Heart left ventricle (tissue), 16 donors: ENCODE measurements at regions of chr10 and their contacts with region 1.

Region 1: DNA sequence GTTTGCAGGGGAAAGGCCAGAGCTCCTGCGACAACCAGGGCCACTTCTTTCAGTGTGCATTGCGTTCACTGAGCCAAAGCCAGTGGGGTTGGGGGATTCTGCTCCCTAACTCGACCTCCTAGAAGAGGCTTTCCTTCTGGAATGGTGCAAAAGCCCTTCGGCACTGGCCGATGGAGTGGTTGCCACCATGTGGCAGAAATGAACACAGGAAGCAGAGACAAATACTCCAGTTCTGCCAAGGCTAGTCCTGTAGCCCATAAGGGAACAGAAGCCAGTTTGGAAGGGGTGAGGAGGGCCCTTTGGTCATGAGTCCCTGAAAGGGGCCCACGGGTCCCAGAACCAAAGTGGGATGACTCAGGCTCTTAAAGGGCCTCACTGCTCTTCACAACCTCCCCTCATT is 29.7 kb upstream of the ACSL5 start:
- DNase-seq: no peak
- ATAC-seq: peak in 3 of 4 donors; percentile 56 to 65 (median 64)
- H3K4me3 ChIP-seq: no peak overlapping the region
- H3K27ac ChIP-seq: no peak overlapping the region
- H3K4me1 ChIP-seq: no peaks in the 10 kb centered on the region
- H3K27me3 ChIP-seq: no peaks in the 10 kb centered on the region
- CTCF ChIP-seq: peak in 4 of 12 donors; percentile 6 to 31 (median 17)
- POLR2A ChIP-seq: no peak

Region 2: DNA sequence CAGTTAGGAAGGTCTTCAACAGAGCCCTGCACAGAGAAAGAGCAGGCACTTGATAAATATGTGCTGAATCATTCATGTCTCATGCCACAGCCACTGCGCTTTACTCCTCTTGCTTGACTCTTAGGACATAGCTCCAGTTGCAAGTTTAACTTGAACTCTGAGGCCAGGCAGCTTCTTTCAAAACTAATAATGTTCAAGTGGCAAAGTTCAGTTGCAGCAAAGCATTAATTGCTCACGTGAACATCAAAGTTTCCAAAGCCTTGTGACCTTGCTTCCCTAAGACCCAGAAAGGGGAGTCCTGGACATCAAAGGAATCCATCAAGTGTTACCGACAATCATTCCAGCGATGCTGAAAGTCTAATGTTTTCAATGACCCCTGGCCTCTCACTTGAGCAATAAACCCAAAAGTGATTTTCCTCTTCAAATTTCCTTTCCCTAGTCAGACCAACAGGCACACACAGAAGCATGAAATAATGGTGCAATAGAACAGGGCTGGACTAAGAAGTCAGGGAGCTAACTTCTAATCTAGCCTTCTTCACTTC is 82.9 kb before region 1 on chr10:
- intact Hi-C with region 1: no loop called
- DNase-seq: no peak
- ATAC-seq: no peak
- H3K4me3 ChIP-seq: no peak overlapping the region
- H3K27ac ChIP-seq: no peak overlapping the region
- H3K4me1 ChIP-seq: no peaks in the 10 kb centered on the region
- H3K27me3 ChIP-seq: no peaks in the 10 kb centered on the region
- CTCF ChIP-seq: no peak
- POLR2A ChIP-seq: no peak

Region 3: DNA sequence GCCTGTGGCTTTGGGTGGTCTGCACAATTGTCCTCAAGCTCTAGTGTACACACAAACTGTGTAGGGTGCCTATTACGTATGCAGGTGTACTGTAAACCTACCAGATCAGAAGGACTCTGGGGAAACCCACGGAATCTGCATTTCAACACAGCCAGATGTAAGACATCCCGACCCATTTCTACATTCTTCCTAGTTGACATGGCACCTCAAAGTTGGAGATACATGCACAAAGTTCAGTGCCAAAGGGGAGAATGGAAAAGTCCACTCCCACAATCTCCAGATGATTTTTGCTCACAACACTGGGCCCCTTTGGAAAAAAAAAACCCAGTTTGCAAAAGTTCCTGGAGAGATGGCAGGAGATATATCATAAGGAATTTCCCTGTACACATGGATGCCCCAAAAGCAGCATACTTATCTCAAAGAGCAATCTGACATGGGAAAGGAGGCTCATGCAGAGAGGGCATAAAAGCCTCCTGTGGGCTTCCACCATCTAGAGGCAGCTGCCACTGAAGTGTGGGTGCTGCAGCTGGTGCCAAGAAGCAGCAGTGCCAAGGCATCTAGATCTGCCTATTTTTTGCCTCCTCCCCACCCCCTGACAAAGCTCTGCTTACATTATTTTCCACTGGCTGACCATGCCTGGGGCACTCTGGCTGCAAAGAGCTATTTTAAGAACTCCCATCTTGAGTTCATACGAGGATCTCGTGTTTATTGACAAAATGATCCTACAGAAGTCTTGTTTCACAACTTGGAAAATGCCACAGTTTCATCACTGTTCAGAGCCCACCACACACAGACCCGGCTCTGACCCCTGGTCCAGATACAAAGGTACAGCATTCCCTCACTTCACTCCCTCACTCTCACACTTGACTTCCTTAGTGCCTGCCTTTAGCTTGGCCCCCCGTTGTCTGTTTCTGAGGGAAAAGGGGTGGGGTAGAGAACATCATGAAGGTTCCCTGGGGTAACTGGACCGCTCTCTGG is 48.1 kb before region 1 on chr10:
- intact Hi-C with region 1: no loop called
- DNase-seq: peak in 4 of 5 donors; percentile 53 to 85 (median 66)
- ATAC-seq: peak; percentile 92 to 97 (median 94)
- H3K4me3 ChIP-seq: no peak overlapping the region
- H3K27ac ChIP-seq: peak overlapping the region in 8 of 12 donors; percentile 6 to 78 (median 38)
- H3K4me1 ChIP-seq: peaks cover 0 to 26% (median 6%) of the 10 kb centered on the region in 12 donors
- H3K27me3 ChIP-seq: no peaks in the 10 kb centered on the region
- CTCF ChIP-seq: no peak
- POLR2A ChIP-seq: no peak

Region 4: GRCh38 chr10:112409755-112410154 is 65.5 kb after region 1 on chr10:
- intact Hi-C with region 1: loop called in 1 of 10 experiments (anchors 5 kb)
- DNase-seq: no peak
- ATAC-seq: no peak
- H3K4me3 ChIP-seq: no peak overlapping the region
- H3K27ac ChIP-seq: no peak overlapping the region
- H3K4me1 ChIP-seq: no peaks in the 10 kb centered on the region
- H3K27me3 ChIP-seq: no peaks in the 10 kb centered on the region
- CTCF ChIP-seq: no peak
- POLR2A ChIP-seq: no peak